Heart right ventricle (tissue), 16 donors: ENCODE measurements at regions of chr3 and their contacts with region 1.

Region 1: DNA sequence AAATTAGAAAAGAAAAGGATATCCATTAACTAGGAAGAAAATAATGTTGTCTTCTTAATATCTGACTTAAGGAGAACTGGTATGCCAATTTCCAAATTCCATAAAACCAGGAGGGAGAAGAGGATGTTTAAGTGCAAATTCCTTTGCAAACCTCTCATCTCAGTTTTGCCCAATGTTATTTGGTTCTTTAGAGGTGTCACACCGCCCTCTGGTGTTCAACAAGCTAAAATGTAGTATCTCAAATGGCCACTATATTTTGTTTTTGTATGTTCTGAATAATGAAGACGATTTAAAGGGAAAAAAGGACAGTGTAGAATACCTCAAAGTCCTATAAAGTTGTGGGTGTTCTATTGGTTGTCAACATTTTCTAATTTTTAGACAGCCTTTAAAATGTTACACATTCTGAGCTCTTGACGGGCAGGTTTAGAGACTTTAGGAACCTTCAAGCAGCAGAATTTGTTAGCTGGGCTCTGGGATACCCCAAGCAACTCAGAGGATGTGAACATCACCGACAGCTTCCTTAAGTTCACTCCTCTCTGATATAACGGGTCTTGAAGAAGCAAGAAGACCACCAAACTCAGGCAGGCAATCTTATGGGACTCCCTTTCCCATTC is 458.3 kb downstream of the MFSD1 start:
- DNase-seq: peak in 1 of 2 donors; percentile 30
- ATAC-seq: peak in 4 of 8 donors; percentile 51 to 64 (median 58)
- H3K4me3 ChIP-seq: no peak overlapping the region
- H3K27ac ChIP-seq: no peak overlapping the region
- H3K4me1 ChIP-seq: no peaks in the 10 kb centered on the region
- H3K27me3 ChIP-seq: peaks cover 0 to 6% (median 0%) of the 10 kb centered on the region in 7 donors
- CTCF ChIP-seq: peak; percentile 37 to 82 (median 73)

Region 2: GRCh38 chr3:157499342-157499963 is 1760.7 kb before region 1 on chr3:
- intact Hi-C with region 1: no loop called
- DNase-seq: peak in 1 of 2 donors; percentile 8
- ATAC-seq: peak in 4 of 8 donors; percentile 16 to 56 (median 32)
- H3K4me3 ChIP-seq: peak overlapping the region in 8 of 10 donors; percentile 16 to 45 (median 35)
- H3K27ac ChIP-seq: no peak overlapping the region
- H3K4me1 ChIP-seq: peaks cover 0 to 13% (median 9%) of the 10 kb centered on the region in 9 donors
- H3K27me3 ChIP-seq: peaks cover 0 to 53% (median 26%) of the 10 kb centered on the region in 7 donors
- CTCF ChIP-seq: no peak

Region 3: GRCh38 chr3:158748237-158748828 is 511.8 kb before region 1 on chr3:
- intact Hi-C with region 1: no loop called
- DNase-seq: peak; percentile 26 to 40
- ATAC-seq: peak in 5 of 8 donors; percentile 25 to 62 (median 58)
- H3K4me3 ChIP-seq: no peak overlapping the region
- H3K27ac ChIP-seq: peak overlapping the region in 1 of 10 donors; percentile 77
- H3K4me1 ChIP-seq: peaks cover 0 to 28% (median 0%) of the 10 kb centered on the region in 9 donors
- H3K27me3 ChIP-seq: no peaks in the 10 kb centered on the region
- CTCF ChIP-seq: no peak

Region 4: GRCh38 chr3:158845765-158846350 is 414.3 kb before region 1 on chr3:
- intact Hi-C with region 1: loop called (anchors 1 to 5 kb)
- DNase-seq: peak in 1 of 2 donors; percentile 13
- ATAC-seq: peak in 1 of 8 donors; percentile 25
- H3K4me3 ChIP-seq: no peak overlapping the region
- H3K27ac ChIP-seq: no peak overlapping the region
- H3K4me1 ChIP-seq: no peaks in the 10 kb centered on the region
- H3K27me3 ChIP-seq: no peaks in the 10 kb centered on the region
- CTCF ChIP-seq: peak; percentile 29 to 76 (median 66)

Region 5: DNA sequence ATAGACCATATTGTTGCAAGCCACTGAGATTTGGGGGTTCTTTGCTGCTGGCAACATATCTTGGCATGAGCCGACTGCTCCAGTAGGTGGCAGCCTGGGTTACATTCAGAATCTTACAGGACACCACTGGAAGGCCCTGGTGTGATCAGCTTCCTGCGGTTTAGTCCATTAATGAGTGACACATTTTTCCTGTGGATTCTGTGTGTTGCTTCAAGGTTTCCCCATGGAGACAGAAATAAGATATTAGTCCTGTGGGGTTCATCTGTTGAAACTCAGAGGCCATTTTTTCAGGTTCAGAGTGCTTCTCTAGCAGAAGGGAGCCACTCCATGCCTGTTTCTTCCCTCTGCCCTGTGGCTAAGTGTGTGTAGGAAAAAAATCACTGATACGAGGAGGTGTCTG is 342.1 kb before region 1 on chr3:
- intact Hi-C with region 1: loop called in 9 of 10 experiments (anchors 1 to 5 kb)
- DNase-seq: peak in 1 of 2 donors; percentile 11
- ATAC-seq: peak in 2 of 8 donors; percentile 50 to 63
- H3K4me3 ChIP-seq: no peak overlapping the region
- H3K27ac ChIP-seq: no peak overlapping the region
- H3K4me1 ChIP-seq: no peaks in the 10 kb centered on the region
- H3K27me3 ChIP-seq: no peaks in the 10 kb centered on the region
- CTCF ChIP-seq: peak in 8 of 9 donors; percentile 8 to 61 (median 50)

Region 6: GRCh38 chr3:159174715-159175692 is 85.2 kb before region 1 on chr3:
- intact Hi-C with region 1: no loop called
- DNase-seq: no peak
- ATAC-seq: no peak
- H3K4me3 ChIP-seq: no peak overlapping the region
- H3K27ac ChIP-seq: no peak overlapping the region
- H3K4me1 ChIP-seq: peaks cover 0 to 12% (median 0%) of the 10 kb centered on the region in 9 donors
- H3K27me3 ChIP-seq: no peaks in the 10 kb centered on the region
- CTCF ChIP-seq: no peak

Region 7: GRCh38 chr3:159593927-159594605 is 333.9 kb after region 1 on chr3:
- intact Hi-C with region 1: loop called in 3 of 10 experiments (anchors 10 kb)
- DNase-seq: no peak
- ATAC-seq: peak in 6 of 8 donors; percentile 51 to 80 (median 74)
- H3K4me3 ChIP-seq: no peak overlapping the region
- H3K27ac ChIP-seq: peak overlapping the region in 3 of 10 donors; percentile 32 to 39 (median 35)
- H3K4me1 ChIP-seq: peaks cover 0 to 23% (median 5%) of the 10 kb centered on the region in 9 donors
- H3K27me3 ChIP-seq: no peaks in the 10 kb centered on the region
- CTCF ChIP-seq: no peak

Region 8: DNA sequence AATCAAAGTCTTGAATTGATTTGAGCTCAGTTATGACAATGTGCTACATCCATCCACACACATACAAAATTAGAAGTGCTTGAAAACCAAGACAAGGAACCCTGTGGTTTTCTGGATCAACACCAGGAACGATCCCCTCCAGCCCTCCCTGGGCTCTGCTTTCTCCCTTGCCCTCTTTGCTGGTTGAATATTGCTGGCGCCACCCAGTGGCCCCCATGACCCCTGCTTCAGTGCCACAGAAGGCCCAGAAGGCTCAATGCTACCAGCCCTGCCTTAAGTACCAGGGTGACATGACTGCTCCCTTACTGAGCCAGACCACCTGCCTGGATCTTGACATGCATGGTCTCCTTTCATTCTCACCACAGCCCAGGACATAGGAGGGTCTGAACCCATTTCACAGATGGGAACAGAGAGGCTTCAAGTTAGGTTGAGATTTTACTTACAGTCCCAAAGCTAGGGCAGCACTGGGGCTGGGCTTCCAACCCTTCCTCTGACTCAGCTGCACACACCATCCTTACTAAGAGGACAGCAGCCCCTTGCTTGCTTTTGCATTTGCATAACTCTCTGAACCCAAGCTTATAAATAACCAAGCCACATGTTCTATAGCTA is 743.5 kb after region 1 on chr3:
- intact Hi-C with region 1: loop called (anchors 5 to 10 kb)
- DNase-seq: peak; percentile 52 to 63
- ATAC-seq: peak; percentile 67 to 92 (median 84)
- H3K4me3 ChIP-seq: no peak overlapping the region
- H3K27ac ChIP-seq: no peak overlapping the region
- H3K4me1 ChIP-seq: peaks cover 0 to 6% (median 0%) of the 10 kb centered on the region in 9 donors
- H3K27me3 ChIP-seq: no peaks in the 10 kb centered on the region
- CTCF ChIP-seq: peak; percentile 44 to 77 (median 68)